ENCODE measurements at regions of chr15 and their contacts with region 1.

Region 1: GRCh38 chr15:44971036-44971435 is 14.5 kb downstream of the TERB2 start:
- DNase-seq: no peak
- H3K4me3 ChIP-seq: no peak overlapping the region
- H3K27ac ChIP-seq: no peak overlapping the region
- H3K4me1 ChIP-seq: no peaks in the 10 kb centered on the region
- H3K27me3 ChIP-seq: no peaks in the 10 kb centered on the region
- CTCF ChIP-seq: no peak
- POLR2A ChIP-seq: no peak

Region 2: DNA sequence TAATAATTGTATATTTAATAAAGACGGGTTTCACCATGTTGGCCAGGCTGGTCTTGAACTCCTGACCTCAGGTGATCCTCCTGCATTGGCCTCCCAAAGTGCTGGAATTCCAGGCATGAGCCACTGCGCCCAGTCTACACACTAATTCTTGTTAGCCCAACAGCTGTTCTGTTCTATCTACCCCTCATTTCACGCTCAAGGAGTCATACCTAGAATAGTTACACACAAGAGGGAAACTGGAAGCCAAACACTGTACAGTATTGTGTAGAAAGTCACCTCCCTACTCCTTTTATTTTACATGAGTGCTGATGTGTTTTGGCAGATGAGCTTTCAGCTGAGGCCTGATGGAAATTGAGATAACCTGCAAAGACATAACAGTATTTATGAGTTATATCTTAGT is 557.0 kb before region 1 on chr15:
- intact Hi-C with region 1: no loop called
- DNase-seq: no peak
- H3K4me3 ChIP-seq: no peak overlapping the region
- H3K27ac ChIP-seq: no peak overlapping the region
- H3K4me1 ChIP-seq: no peaks in the 10 kb centered on the region
- H3K27me3 ChIP-seq: no peaks in the 10 kb centered on the region
- CTCF ChIP-seq: no peak
- POLR2A ChIP-seq: no peak

Region 3: GRCh38 chr15:44910981-44911625 is 59.9 kb before region 1 on chr15:
- intact Hi-C with region 1: no loop called
- DNase-seq: no peak
- H3K4me3 ChIP-seq: no peak overlapping the region
- H3K27ac ChIP-seq: no peak overlapping the region
- H3K4me1 ChIP-seq: no peaks in the 10 kb centered on the region
- H3K27me3 ChIP-seq: no peaks in the 10 kb centered on the region
- CTCF ChIP-seq: no peak
- POLR2A ChIP-seq: no peak

Region 4: GRCh38 chr15:45037936-45038335 is 66.9 kb after region 1 on chr15:
- intact Hi-C with region 1: loop called in 1 of 2 experiments (anchors 5 kb)
- DNase-seq: no peak
- H3K4me3 ChIP-seq: no peak overlapping the region
- H3K27ac ChIP-seq: no peak overlapping the region
- H3K4me1 ChIP-seq: peaks cover 0 to 4% of the 10 kb centered on the region in 2 donors
- H3K27me3 ChIP-seq: no peaks in the 10 kb centered on the region
- CTCF ChIP-seq: no peak
- POLR2A ChIP-seq: no peak

Region 5: DNA sequence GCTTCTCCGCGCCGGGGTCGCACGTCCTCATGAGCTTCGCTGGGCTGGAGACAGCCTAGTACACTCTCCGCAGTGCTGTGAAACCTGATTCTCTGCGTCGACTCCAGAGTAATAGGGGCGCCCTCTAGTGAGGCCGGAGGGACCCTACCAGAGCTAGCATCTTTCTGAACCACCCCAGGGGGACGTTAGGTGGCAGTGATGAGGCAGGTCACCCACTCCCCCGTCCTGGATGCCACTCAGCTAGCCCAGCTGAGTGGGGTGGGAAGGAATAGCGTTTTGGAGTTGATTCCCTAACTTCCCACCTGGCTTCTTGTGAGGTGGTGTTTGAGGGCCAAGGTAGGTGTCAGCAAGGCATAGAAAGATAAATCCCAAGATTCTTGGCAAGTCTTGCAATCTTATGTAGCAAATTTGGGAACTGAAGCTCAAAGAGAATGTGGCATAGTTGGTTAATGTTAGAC is 147.1 kb after region 1 on chr15:
- intact Hi-C with region 1: loop called in 1 of 2 experiments (anchors 10 kb)
- DNase-seq: peak; percentile 87 to 96 (median 93)
- H3K4me3 ChIP-seq: no peak overlapping the region
- H3K27ac ChIP-seq: no peak overlapping the region
- H3K4me1 ChIP-seq: peaks cover 6 to 13% of the 10 kb centered on the region in 2 donors
- H3K27me3 ChIP-seq: peaks cover 45% of the 10 kb centered on the region
- CTCF ChIP-seq: peak; percentile 93 to 99 (median 98)
- POLR2A ChIP-seq: no peak

Measured in adrenal gland (tissue), 19 donors.